PC-9 (cell line): ENCODE measurements at regions of chr17 and their contacts with region 1.

Region 1: GRCh38 chr17:50697663-50698274 is 9.9 kb downstream of the ANKRD40 start:
- DNase-seq: no peak
- H3K4me3 ChIP-seq: no peak overlapping the region
- H3K27ac ChIP-seq: peak overlapping the region; percentile 51; the same call in 1 of the 2 replicates
- H3K4me1 ChIP-seq: peaks cover 84% of the 10 kb centered on the region
- H3K27me3 ChIP-seq: no peaks in the 10 kb centered on the region
- CTCF ChIP-seq: peak; percentile 48; the same call in 1 of the 2 replicates

Region 2: DNA sequence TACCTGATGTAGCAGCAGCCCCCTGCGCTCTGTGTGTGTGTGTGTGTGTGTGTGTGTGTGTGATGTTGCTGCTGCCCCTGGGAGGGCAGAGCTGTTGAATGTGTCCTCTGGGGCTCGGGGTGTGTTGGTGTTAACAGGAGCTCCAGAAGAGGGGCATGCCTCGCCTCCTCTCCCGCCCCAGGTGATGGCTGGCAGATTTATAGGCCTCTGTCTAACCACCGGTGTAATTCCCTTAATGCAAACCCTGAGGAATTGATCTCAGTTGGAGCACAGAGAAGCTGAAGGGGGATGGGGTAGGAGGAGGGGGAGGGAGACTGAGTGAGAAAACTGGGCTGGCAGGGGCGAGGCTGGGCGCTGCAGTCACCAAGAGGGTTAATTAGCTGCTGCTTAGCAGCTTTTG is 127.2 kb before region 1 on chr17:
- CTCF ChIA-PET with region 1: interaction called, 10 read pairs
- POLR2A ChIA-PET with region 1: no interaction called
- intact Hi-C with region 1: no loop called
- DNase-seq: no peak
- H3K4me3 ChIP-seq: no peak overlapping the region
- H3K27ac ChIP-seq: no peak overlapping the region
- H3K4me1 ChIP-seq: no peaks in the 10 kb centered on the region
- H3K27me3 ChIP-seq: peaks cover 16% of the 10 kb centered on the region; the same call in 1 of the 2 replicates
- CTCF ChIP-seq: no peak

Region 3: DNA sequence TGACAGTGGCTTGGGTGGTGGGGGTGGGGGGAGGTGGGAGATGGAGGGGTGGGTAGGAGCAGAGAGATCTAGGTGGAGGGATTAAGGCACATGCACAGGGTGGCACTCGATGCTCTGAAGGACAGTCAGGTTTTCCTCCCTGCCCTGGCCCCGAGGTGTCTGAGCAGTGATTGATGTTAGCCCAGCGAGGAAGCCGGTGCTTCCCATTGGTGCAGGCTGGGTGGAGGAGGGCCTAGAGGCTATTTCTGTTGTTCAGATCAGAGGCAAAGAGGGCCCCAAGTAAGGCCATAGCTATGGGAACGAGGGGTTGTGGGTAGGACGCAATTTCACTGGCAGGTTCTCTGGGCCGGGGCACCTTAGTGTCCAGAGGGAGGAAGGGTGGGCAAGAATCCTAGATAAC is 114.1 kb before region 1 on chr17:
- CTCF ChIA-PET with region 1: no interaction called
- POLR2A ChIA-PET with region 1: no interaction called
- intact Hi-C with region 1: no loop called
- DNase-seq: no peak
- H3K4me3 ChIP-seq: no peak overlapping the region
- H3K27ac ChIP-seq: no peak overlapping the region
- H3K4me1 ChIP-seq: peaks cover 10% of the 10 kb centered on the region
- H3K27me3 ChIP-seq: peaks cover 21% of the 10 kb centered on the region; the same call in 1 of the 2 replicates
- CTCF ChIP-seq: no peak

Region 4: DNA sequence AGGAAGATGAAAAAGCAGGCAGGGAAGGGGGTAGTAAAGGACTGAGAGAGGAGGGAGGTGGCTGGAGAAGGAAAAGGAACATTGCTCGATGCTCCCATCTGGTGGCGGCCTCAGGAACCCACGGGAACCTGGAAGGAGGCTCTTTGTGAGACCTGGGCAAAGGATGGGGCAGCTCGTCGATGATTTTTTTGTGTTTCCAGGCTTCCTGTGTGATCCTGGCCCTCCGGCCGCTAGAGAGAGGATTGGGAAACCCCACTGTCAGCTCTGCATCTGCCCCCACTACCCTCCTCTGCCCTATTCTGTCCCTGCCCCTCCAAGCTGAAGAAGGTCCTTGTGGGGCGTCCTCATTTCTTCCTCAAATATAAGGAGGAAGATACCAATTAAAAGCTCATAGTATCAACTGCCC is 144.2 kb after region 1 on chr17:
- CTCF ChIA-PET with region 1: no interaction called
- POLR2A ChIA-PET with region 1: no interaction called
- intact Hi-C with region 1: loop called (anchors 5 kb)
- DNase-seq: peak; percentile 43 to 76
- H3K4me3 ChIP-seq: no peak overlapping the region
- H3K27ac ChIP-seq: no peak overlapping the region
- H3K4me1 ChIP-seq: peaks cover 18% of the 10 kb centered on the region
- H3K27me3 ChIP-seq: no peaks in the 10 kb centered on the region
- CTCF ChIP-seq: peak; percentile 83